Pancreas (tissue), 10 donors: ENCODE measurements at regions of chr6 and their contacts with region 1.

Region 1: DNA sequence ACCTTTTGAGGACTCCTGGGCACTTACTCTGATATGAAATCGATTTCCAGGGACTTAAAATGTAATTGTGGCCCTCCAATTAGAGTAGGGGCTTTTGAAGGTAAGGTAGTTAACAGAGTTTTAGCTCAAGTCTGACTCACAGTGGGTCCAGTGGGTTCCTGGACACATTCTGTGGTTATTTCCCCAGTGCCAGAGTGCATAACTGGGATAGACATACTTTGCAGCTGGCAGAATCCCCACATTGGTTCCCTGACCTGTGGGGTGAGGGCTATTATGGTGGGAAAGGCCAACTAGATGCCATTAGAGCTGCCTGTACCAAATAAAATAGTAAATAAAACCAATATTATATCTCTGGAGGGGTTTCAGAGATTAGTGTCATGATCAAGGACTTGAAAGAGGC is 243.8 kb upstream of the EPHA7 start:
- DNase-seq: no peak
- ATAC-seq: no peak
- H3K4me3 ChIP-seq: no peak overlapping the region
- H3K27ac ChIP-seq: no peak overlapping the region
- H3K4me1 ChIP-seq: no peaks in the 10 kb centered on the region
- H3K27me3 ChIP-seq: no peaks in the 10 kb centered on the region
- CTCF ChIP-seq: no peak

Region 2: GRCh38 chr6:93496548-93496947 is 166.6 kb before region 1 on chr6:
- intact Hi-C with region 1: no loop called
- DNase-seq: no peak
- ATAC-seq: no peak
- H3K4me3 ChIP-seq: no peak overlapping the region
- H3K27ac ChIP-seq: no peak overlapping the region
- H3K4me1 ChIP-seq: no peaks in the 10 kb centered on the region
- H3K27me3 ChIP-seq: no peaks in the 10 kb centered on the region
- CTCF ChIP-seq: no peak

Region 3: GRCh38 chr6:93644611-93645010 is 18.5 kb before region 1 on chr6:
- intact Hi-C with region 1: loop called in 1 of 3 experiments (anchors 2 kb)
- DNase-seq: no peak
- ATAC-seq: no peak
- H3K4me3 ChIP-seq: no peak overlapping the region
- H3K27ac ChIP-seq: no peak overlapping the region
- H3K4me1 ChIP-seq: no peaks in the 10 kb centered on the region
- H3K27me3 ChIP-seq: no peaks in the 10 kb centered on the region
- CTCF ChIP-seq: no peak